ENCODE measurements at regions of chr13 and their contacts with region 1.

Region 1: GRCh38 chr13:98201984-98202383 is 24.9 kb upstream of the RNF113B start:
- DNase-seq: no peak
- ATAC-seq: no peak

Region 2: DNA sequence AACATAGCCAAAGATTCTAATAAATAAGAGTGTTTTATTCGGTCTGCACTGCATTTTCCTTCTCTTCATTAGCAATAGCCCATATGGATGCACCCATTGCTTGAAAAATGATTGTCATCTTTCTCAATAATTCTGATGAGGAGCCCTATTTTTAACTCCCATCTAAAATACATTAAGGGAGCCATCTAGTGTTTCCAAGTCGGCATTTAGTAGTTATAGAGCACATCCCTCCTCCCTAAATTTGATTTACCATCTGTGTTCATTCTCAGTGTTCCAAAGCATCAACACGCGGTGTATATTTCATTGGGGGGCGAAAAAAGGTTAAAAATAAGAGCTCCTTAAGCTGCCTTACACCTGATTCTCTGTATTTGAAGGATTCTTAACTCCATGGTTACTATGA is 367.7 kb before region 1 on chr13:
- intact Hi-C with region 1: no loop called
- DNase-seq: no peak
- ATAC-seq: no peak

Region 3: DNA sequence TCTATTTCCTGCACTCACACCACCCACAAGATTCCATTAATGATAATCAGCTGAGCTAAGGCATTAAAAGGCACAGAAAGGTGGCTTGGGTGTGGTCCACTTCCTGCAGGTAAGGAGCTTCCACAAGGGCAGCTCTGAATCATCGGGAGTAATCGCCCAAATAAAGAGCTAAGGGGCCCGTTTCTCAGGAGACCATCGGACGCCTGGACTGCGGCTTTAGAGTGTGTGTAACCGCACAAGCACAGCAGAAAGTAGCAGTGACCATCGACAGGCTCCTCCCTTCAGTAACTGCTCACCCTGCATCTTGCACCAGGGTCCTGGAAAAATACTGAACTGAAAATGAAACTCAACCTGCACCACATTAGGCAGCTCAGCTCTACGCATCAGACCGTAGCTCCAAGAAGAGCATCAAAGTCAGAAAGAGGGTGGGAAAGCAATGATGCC is 369.0 kb after region 1 on chr13:
- intact Hi-C with region 1: loop called (anchors 5 kb)
- DNase-seq: no peak
- ATAC-seq: peak; percentile 47